B cell (primary cell): ENCODE measurements at regions of chr5 and their contacts with region 1.

Region 1: GRCh38 chr5:134527146-134527960 is 1.9 kb downstream of the JADE2 start:
- DNase-seq: peak; percentile 82
- ATAC-seq: peak; percentile 26
- H3K4me3 ChIP-seq: peak overlapping the region; percentile 70 to 100 (median 98)
- H3K4me3 Mint-ChIP-seq: peak overlapping the region; percentile 99
- H3K27ac ChIP-seq: peak overlapping the region; percentile 54 to 99
- H3K27ac Mint-ChIP-seq: peak overlapping the region; percentile 99
- H3K4me1 ChIP-seq: peaks cover 34 to 53% of the 10 kb centered on the region in 2 donors
- H3K4me1 Mint-ChIP-seq: peaks cover 57% of the 10 kb centered on the region
- H3K27me3 ChIP-seq: no peaks in the 10 kb centered on the region
- H3K27me3 Mint-ChIP-seq: no peaks in the 10 kb centered on the region
- CTCF ChIP-seq: peak; percentile 80

Region 2: GRCh38 chr5:134225618-134226440 is 301.5 kb before region 1 on chr5 and contains the start of gene PPP2CA:
- CTCF ChIA-PET with region 1: interaction called, 4 read pairs
- POLR2A ChIA-PET with region 1: interaction called, 5 read pairs
- intact Hi-C with region 1: loop called (anchors 1 kb)
- DNase-seq: peak; percentile 100
- ATAC-seq: peak; percentile 77
- H3K4me3 ChIP-seq: peak within 1 kb of the TSS; percentile 87 to 100 (median 98)
- H3K4me3 Mint-ChIP-seq: peak within 1 kb of the TSS; percentile 94
- H3K27ac ChIP-seq: peak within 1 kb of the TSS; percentile 95 to 100
- H3K27ac Mint-ChIP-seq: peak within 1 kb of the TSS; percentile 99
- H3K4me1 ChIP-seq: peaks cover 36% of the 10 kb centered on the region in 2 donors
- H3K4me1 Mint-ChIP-seq: peaks cover 51% of the 10 kb centered on the region
- H3K27me3 ChIP-seq: no peaks in the 10 kb centered on the region
- H3K27me3 Mint-ChIP-seq: no peaks in the 10 kb centered on the region
- CTCF ChIP-seq: peak; percentile 27
- total RNA-seq, gene PPP2CA: 86.2 and 100 TPM in 2 replicates

Region 3: GRCh38 chr5:134446938-134447337 is 80.4 kb before region 1 on chr5:
- CTCF ChIA-PET with region 1: interaction called, 18 read pairs
- POLR2A ChIA-PET with region 1: interaction called, 29 read pairs
- intact Hi-C with region 1: loop called (anchors 1 kb)
- DNase-seq: peak; percentile 84
- ATAC-seq: peak; percentile 86
- H3K4me3 ChIP-seq: peak overlapping the region in 1 of 5 experiments; percentile 38
- H3K4me3 Mint-ChIP-seq: peak overlapping the region; percentile 79
- H3K27ac ChIP-seq: peak overlapping the region; percentile 47 to 52
- H3K27ac Mint-ChIP-seq: peak overlapping the region; percentile 87
- H3K4me1 ChIP-seq: peaks cover 37 to 42% of the 10 kb centered on the region in 2 donors
- H3K4me1 Mint-ChIP-seq: peaks cover 56% of the 10 kb centered on the region
- H3K27me3 ChIP-seq: no peaks in the 10 kb centered on the region
- H3K27me3 Mint-ChIP-seq: no peaks in the 10 kb centered on the region
- CTCF ChIP-seq: no peak

Region 4: GRCh38 chr5:134555890-134556311 is 28.5 kb after region 1 on chr5:
- CTCF ChIA-PET with region 1: interaction called, 76 read pairs
- POLR2A ChIA-PET with region 1: interaction called, 65 read pairs
- intact Hi-C with region 1: loop called (anchors 1 kb)
- DNase-seq: peak; percentile 83
- ATAC-seq: peak; percentile 64
- H3K4me3 ChIP-seq: peak overlapping the region in 1 of 5 experiments; percentile 32
- H3K4me3 Mint-ChIP-seq: peak overlapping the region; percentile 83
- H3K27ac ChIP-seq: peak overlapping the region; percentile 86 to 98
- H3K27ac Mint-ChIP-seq: peak overlapping the region; percentile 97
- H3K4me1 ChIP-seq: peaks cover 37 to 58% of the 10 kb centered on the region in 2 donors
- H3K4me1 Mint-ChIP-seq: peaks cover 62% of the 10 kb centered on the region
- H3K27me3 ChIP-seq: no peaks in the 10 kb centered on the region
- H3K27me3 Mint-ChIP-seq: no peaks in the 10 kb centered on the region
- CTCF ChIP-seq: no peak

Region 5: GRCh38 chr5:134637161-134637582 is 109.8 kb after region 1 on chr5:
- CTCF ChIA-PET with region 1: no interaction called
- POLR2A ChIA-PET with region 1: no interaction called
- intact Hi-C with region 1: loop called (anchors 5 kb)
- DNase-seq: no peak
- ATAC-seq: no peak
- H3K4me3 ChIP-seq: no peak overlapping the region
- H3K4me3 Mint-ChIP-seq: no peak overlapping the region
- H3K27ac ChIP-seq: no peak overlapping the region
- H3K27ac Mint-ChIP-seq: no peak overlapping the region
- H3K4me1 ChIP-seq: peaks cover under 1 to 4% of the 10 kb centered on the region in 2 donors
- H3K4me1 Mint-ChIP-seq: peaks cover 6% of the 10 kb centered on the region
- H3K27me3 ChIP-seq: no peaks in the 10 kb centered on the region
- H3K27me3 Mint-ChIP-seq: no peaks in the 10 kb centered on the region
- CTCF ChIP-seq: no peak